ENCODE measurements at regions of chr16 and their contacts with region 1.

Region 1: GRCh38 chr16:67521095-67521804 is 7.4 kb upstream of the RIPOR1 start:
- DNase-seq: peak; percentile 98
- H3K4me3 Mint-ChIP-seq: peak overlapping the region; percentile 73
- H3K27ac Mint-ChIP-seq: peak overlapping the region; percentile 73
- H3K4me1 Mint-ChIP-seq: peaks cover 15% of the 10 kb centered on the region
- H3K27me3 Mint-ChIP-seq: peaks cover 36% of the 10 kb centered on the region
- CTCF ChIP-seq: peak; percentile 90

Region 2: DNA sequence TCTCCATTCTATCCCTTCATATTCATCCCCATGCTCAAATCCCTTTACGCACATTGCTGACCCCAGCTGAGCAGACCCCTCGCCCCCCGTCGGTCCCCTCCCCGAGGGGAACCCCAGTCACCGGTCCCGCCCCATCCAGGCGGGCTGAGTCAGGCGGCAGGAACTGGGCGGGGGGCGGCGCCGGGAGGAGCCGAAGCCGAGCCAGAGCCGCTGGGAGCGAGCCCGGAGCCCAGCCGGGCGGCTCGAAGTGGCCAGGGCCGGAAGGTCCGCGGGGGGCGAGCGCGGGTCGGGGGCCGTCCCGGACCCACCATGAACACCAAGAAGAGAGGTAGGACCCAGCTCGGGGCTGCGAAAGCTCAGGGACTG is 16.0 kb after region 1 on chr16:
- CTCF ChIA-PET with region 1: interaction called, 11 read pairs
- intact Hi-C with region 1: no loop called
- DNase-seq: peak; percentile 66
- H3K4me3 Mint-ChIP-seq: peak overlapping the region; percentile 69
- H3K27ac Mint-ChIP-seq: peak overlapping the region; percentile 47
- H3K4me1 Mint-ChIP-seq: peaks cover 55% of the 10 kb centered on the region
- H3K27me3 Mint-ChIP-seq: no peaks in the 10 kb centered on the region
- CTCF ChIP-seq: no peak

Region 3: DNA sequence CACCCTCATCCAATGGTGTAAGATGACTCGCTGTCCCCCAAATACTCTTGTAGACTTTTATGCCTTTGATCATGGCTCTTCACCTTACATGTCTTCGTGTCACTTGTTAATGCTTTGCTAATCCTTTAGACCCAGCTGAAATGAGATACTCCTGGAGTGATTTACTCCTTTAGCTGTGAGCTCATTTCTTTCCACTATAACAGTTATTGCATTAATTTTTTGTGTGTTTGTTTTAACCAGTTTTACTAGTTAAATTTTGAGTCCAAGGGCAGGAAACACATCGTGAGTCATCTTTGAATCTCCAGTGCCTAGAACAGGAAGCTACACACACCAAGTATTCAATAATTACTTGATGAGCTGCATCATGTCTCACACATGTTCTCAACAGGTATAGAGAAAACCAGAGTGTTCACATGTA is 34.6 kb after region 1 on chr16:
- CTCF ChIA-PET with region 1: interaction called, 37 read pairs
- intact Hi-C with region 1: no loop called
- DNase-seq: no peak
- H3K4me3 Mint-ChIP-seq: peak overlapping the region; percentile 12
- H3K27ac Mint-ChIP-seq: peak overlapping the region; percentile 55
- H3K4me1 Mint-ChIP-seq: peaks cover 18% of the 10 kb centered on the region
- H3K27me3 Mint-ChIP-seq: no peaks in the 10 kb centered on the region
- CTCF ChIP-seq: no peak

Region 4: DNA sequence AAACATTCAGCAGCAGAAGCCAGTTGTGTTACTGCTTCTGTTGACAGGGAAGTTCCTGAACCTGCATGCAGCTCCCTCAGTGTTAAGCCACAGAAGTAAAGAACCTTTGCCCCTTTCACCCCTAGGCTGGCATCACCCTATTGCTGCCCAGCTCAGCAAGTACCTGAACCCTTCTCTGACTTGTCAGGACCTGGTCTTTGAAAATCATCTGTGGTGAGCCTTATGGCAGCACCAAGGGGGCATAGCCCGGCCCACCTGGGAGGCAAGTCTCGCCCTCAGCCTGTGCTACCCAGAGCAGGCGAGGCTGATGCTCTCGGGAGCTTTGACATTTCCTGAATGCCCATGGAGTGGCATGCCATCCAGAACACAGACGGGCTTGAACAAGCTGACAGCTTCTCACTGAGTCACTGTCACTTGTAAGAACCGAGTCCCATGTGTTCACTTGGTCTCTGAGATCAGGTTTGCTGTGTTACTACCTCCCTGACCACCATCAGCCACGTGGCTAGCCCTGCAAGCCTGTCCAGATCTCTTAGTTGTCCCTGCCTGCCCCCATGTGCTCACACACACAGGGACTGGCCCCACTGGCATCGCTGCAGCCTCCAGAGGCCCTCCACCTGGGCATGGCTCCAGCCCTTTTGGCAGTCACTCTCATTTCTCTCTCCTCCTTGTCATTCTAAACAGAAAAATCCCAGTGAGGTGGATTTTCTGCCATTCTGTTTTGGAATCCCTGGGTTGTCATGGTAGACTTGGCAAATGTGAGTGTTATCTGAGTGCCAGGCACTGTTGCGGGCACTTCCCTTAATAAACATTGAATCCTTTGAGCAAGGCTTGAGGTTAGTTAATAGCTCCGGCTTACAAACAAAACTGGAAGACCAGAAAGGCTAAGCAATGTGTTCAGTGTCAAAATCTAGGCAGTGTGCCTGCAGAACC is 120.8 kb after region 1 on chr16:
- CTCF ChIA-PET with region 1: interaction called, 11 read pairs
- intact Hi-C with region 1: no loop called
- DNase-seq: no peak
- H3K4me3 Mint-ChIP-seq: no peak overlapping the region
- H3K27ac Mint-ChIP-seq: no peak overlapping the region
- H3K4me1 Mint-ChIP-seq: no peaks in the 10 kb centered on the region
- H3K27me3 Mint-ChIP-seq: peaks cover 24% of the 10 kb centered on the region
- CTCF ChIP-seq: no peak

Region 5: GRCh38 chr16:67667817-67668494 is 146.7 kb after region 1 on chr16:
- CTCF ChIA-PET with region 1: interaction called, 31 read pairs
- intact Hi-C with region 1: no loop called
- DNase-seq: peak; percentile 93
- H3K4me3 Mint-ChIP-seq: peak overlapping the region; percentile 88
- H3K27ac Mint-ChIP-seq: no peak overlapping the region
- H3K4me1 Mint-ChIP-seq: no peaks in the 10 kb centered on the region
- H3K27me3 Mint-ChIP-seq: no peaks in the 10 kb centered on the region
- CTCF ChIP-seq: peak; percentile 59

Region 6: GRCh38 chr16:67719048-67719777 is 198.0 kb after region 1 on chr16 and contains the start of gene GFOD2:
- CTCF ChIA-PET with region 1: interaction called, 10 read pairs
- intact Hi-C with region 1: no loop called
- DNase-seq: peak; percentile 99
- H3K4me3 Mint-ChIP-seq: peak within 1 kb of the TSS; percentile 96
- H3K27ac Mint-ChIP-seq: peak within 1 kb of the TSS; percentile 80
- H3K4me1 Mint-ChIP-seq: peaks cover 24% of the 10 kb centered on the region
- H3K27me3 Mint-ChIP-seq: no peaks in the 10 kb centered on the region
- CTCF ChIP-seq: no peak
- total RNA-seq, gene GFOD2: 23.9 and 25.6 TPM in 2 replicates